ENCODE measurements at regions of chrX and their contacts with region 1.

Region 1: DNA sequence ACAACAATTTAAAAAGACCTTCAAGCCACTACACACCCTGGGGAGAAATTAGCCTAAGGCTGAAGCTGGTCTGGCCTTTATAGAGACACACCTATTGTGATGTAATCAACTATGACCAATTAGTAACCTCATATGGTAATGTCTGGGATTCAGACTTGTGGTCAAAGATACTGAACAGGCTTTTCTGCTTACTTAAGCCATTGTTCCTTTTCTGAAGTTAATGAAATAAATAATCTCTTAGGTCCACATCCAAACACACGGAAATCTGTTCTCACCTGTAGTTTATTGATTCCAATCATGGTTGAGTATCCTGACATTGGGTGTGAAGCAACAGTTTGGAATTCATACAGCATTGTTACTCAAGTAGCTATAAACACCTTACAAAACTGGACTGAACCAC is 152.5 kb downstream of the PLS3 start:
- DNase-seq: no peak
- ATAC-seq: no peak
- H3K4me3 ChIP-seq: no peak overlapping the region
- H3K27ac ChIP-seq: no peak overlapping the region
- H3K4me1 ChIP-seq: no peaks in the 10 kb centered on the region
- H3K27me3 ChIP-seq: no peaks in the 10 kb centered on the region
- CTCF ChIP-seq: no peak
- POLR2A ChIP-seq: no peak
- RAD21 ChIP-seq: no peak

Region 2: GRCh38 chrX:115560978-115561604 is 152.4 kb before region 1 on chrX and contains the start of gene PLS3:
- CTCF ChIA-PET with region 1: no interaction called
- POLR2A ChIA-PET with region 1: no interaction called
- RAD21 ChIA-PET with region 1: no interaction called
- intact Hi-C with region 1: no loop called
- DNase-seq: peak; percentile 77
- ATAC-seq: peak; percentile 89
- H3K4me3 ChIP-seq: peak within 1 kb of the TSS; percentile 53 to 70
- H3K27ac ChIP-seq: peak within 1 kb of the TSS; percentile 85
- H3K4me1 ChIP-seq: peaks cover 13 to 25% of the 10 kb centered on the region in 2 experiments
- H3K27me3 ChIP-seq: no peaks in the 10 kb centered on the region
- CTCF ChIP-seq: no peak
- POLR2A ChIP-seq: peak; percentile 45
- RAD21 ChIP-seq: no peak
- total RNA-seq, gene PLS3: 50.8 TPM

Region 3: GRCh38 chrX:115665122-115665521 is 48.4 kb before region 1 on chrX:
- CTCF ChIA-PET with region 1: no interaction called
- POLR2A ChIA-PET with region 1: no interaction called
- RAD21 ChIA-PET with region 1: no interaction called
- intact Hi-C with region 1: loop called (anchors 2 kb)
- DNase-seq: no peak
- ATAC-seq: no peak
- H3K4me3 ChIP-seq: no peak overlapping the region
- H3K27ac ChIP-seq: no peak overlapping the region
- H3K4me1 ChIP-seq: no peaks in the 10 kb centered on the region
- H3K27me3 ChIP-seq: no peaks in the 10 kb centered on the region
- CTCF ChIP-seq: no peak
- POLR2A ChIP-seq: no peak
- RAD21 ChIP-seq: no peak

Measured in HCT116 (cell line).